Ovary (tissue), 10 donors: ENCODE measurements at regions of chr11 and their contacts with region 1.

Region 1: GRCh38 chr11:73350908-73351636 is 25.1 kb upstream of the RELT start:
- DNase-seq: peak in 2 of 5 donors; percentile 64 to 70
- H3K4me3 ChIP-seq: no peak overlapping the region
- H3K27ac ChIP-seq: no peak overlapping the region
- H3K4me1 ChIP-seq: no peaks in the 10 kb centered on the region
- H3K27me3 ChIP-seq: no peaks in the 10 kb centered on the region
- CTCF ChIP-seq: peak; percentile 84 to 90 (median 86)
- EP300 ChIP-seq: no peak
- POLR2A ChIP-seq: no peak

Region 2: DNA sequence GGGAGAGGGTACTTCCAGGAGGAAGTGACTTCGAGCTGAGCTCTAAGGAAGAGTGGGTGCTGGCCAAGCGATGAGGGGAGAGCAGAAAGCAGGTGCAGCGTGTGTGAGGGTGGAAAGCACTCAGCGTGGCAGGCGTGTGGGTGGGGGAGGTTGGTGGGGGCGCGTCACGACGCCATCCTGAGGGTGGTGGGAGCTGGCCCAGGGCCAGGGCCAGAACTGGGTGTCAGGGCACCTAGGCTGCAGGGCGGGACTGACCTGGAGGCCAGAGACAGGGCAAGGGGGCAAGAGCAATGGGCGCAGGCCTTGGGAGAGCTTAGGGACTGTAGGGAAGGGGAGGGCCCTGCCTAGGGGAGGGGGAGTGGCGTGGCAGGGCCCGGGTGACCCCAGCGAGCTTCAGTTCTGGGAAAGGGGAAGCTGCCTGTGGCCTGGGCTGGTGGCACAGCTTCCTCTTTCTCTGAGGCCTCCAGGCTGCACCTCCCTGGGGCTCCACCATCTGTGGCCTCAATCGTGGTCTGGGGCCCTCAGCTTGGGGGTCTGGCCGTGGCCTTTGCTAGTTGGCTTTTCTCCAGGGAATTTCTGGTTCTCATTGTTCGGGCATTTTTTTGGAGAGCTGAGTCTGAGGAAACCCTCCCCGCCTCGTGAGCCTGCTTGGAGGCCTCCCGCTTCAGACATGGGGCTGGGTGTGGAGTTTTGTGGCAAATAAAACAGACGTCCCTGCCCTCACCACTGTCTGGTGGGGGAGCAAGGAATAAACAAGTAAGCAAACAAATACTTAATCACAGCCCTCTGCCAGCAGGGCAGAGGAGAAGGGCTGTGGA is 34.0 kb after region 1 on chr11:
- intact Hi-C with region 1: loop called in 1 of 4 experiments (anchors 5 kb)
- DNase-seq: no peak
- H3K4me3 ChIP-seq: no peak overlapping the region
- H3K27ac ChIP-seq: no peak overlapping the region
- H3K4me1 ChIP-seq: no peaks in the 10 kb centered on the region
- H3K27me3 ChIP-seq: no peaks in the 10 kb centered on the region
- CTCF ChIP-seq: no peak
- EP300 ChIP-seq: no peak
- POLR2A ChIP-seq: no peak